MCF 10A (cell line): ENCODE measurements at regions of chr5 and their contacts with region 1.

Region 1: DNA sequence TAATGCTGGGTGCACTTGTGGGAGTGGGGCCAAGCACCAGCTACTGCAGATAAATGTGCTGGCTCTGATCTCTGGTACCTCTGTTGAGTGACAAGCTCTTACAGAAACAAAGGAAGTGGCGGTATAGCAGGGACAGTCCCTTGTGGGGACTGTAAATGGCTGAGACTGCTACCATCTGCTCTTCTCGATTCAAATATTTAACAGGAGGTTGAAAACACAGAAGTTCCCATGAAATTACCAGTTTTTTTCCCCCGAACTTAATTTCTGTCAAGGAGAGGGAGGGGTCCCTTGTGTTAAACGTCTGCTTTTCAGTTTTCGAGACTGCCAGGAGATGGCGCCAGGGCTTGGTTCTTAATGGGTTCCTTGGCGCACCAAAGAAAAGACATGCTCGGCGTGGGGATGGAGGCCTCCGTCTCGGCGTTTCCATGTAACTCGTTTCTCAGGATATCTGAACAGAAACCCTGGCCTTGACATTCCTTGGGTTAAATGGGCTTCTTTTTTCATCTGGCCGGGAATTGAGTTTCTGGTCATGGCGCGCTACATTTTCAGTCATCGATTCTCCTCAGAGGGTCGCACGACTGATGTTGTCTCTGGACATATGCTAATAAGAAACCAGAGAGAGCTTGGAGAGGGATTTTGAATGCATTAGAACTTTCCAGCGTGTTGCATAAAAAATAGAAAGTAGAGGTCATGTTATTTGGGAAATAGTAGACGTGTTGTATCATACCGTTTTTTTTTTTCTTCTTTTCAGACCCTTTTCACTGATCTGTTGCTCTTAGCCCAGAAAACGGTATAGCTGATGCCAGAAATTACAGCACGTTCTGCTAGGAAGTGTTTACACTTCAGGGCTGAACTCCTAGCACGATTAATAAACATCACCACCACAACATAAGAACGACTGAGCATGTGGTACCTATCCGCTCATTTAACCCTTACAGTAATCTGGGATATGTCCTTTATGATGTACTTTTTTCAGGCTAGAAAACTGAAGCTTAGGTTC is 64.0 kb downstream of the CARTPT start:
- DNase-seq: peak; percentile 75
- H3K4me3 Mint-ChIP-seq: no peak overlapping the region
- H3K27ac Mint-ChIP-seq: no peak overlapping the region
- H3K4me1 Mint-ChIP-seq: peaks cover 13% of the 10 kb centered on the region
- H3K27me3 Mint-ChIP-seq: peaks cover 7% of the 10 kb centered on the region
- CTCF ChIP-seq: peak; percentile 66

Region 2: DNA sequence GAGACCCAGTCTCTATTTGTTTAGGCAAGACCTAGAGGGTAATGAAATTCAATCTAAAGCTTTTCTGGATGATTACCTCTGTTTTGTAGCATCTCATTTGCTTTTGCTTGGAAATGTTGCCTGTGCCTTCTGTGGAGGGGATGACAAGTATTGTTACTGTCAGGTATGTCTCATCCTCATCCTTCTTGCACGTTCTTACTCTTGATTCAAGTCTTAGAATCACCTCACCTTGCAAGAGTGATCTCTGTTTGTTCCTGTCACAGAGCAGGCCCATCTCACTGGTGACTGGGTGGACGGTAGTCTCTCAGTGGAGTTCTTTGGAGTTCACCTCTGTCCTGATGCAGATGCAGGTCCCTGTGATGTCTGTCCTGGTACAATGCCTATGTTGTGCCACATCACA is 162.4 kb before region 1 on chr5:
- CTCF ChIA-PET with region 1: no interaction called
- POLR2A ChIA-PET with region 1: no interaction called
- intact Hi-C with region 1: no loop called
- DNase-seq: no peak
- H3K4me3 Mint-ChIP-seq: no peak overlapping the region
- H3K27ac Mint-ChIP-seq: no peak overlapping the region
- H3K4me1 Mint-ChIP-seq: no peaks in the 10 kb centered on the region
- H3K27me3 Mint-ChIP-seq: no peaks in the 10 kb centered on the region
- CTCF ChIP-seq: no peak

Region 3: DNA sequence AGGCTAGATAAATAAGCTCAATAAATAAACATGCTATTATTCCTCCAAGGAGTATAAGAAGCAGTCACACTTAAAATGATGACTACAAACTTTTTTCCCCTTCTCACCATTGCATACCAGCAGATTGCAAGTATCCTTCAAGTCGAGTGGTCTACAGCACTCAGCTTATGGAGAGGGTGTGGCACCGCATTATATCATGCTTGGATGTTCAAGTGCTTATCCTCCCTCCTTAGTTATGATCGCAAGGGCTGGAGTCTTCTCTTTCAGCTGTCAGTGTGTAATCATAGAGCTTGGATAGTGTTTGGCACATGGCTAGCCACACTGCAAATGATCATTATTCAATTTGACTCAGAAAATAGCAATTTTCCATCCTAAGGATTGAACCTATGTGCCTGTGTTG is 60.0 kb after region 1 on chr5:
- CTCF ChIA-PET with region 1: no interaction called
- POLR2A ChIA-PET with region 1: no interaction called
- intact Hi-C with region 1: no loop called
- DNase-seq: no peak
- H3K4me3 Mint-ChIP-seq: no peak overlapping the region
- H3K27ac Mint-ChIP-seq: no peak overlapping the region
- H3K4me1 Mint-ChIP-seq: no peaks in the 10 kb centered on the region
- H3K27me3 Mint-ChIP-seq: peaks cover 11% of the 10 kb centered on the region
- CTCF ChIP-seq: no peak

Region 4: GRCh38 chr5:71922584-71923106 is 139.6 kb after region 1 on chr5:
- CTCF ChIA-PET with region 1: interaction called, 4 read pairs
- POLR2A ChIA-PET with region 1: interaction called, 4 read pairs
- intact Hi-C with region 1: loop called (anchors 2 kb)
- DNase-seq: peak; percentile 91
- H3K4me3 Mint-ChIP-seq: no peak overlapping the region
- H3K27ac Mint-ChIP-seq: peak overlapping the region; percentile 71
- H3K4me1 Mint-ChIP-seq: peaks cover 26% of the 10 kb centered on the region
- H3K27me3 Mint-ChIP-seq: no peaks in the 10 kb centered on the region
- CTCF ChIP-seq: no peak

Region 5: GRCh38 chr5:72108202-72109061 is 325.4 kb after region 1 on chr5:
- CTCF ChIA-PET with region 1: no interaction called
- POLR2A ChIA-PET with region 1: no interaction called
- intact Hi-C with region 1: loop called (anchors 5 kb)
- DNase-seq: peak; percentile 38
- H3K4me3 Mint-ChIP-seq: peak overlapping the region; percentile 83
- H3K27ac Mint-ChIP-seq: no peak overlapping the region
- H3K4me1 Mint-ChIP-seq: peaks cover 5% of the 10 kb centered on the region
- H3K27me3 Mint-ChIP-seq: peaks cover 11% of the 10 kb centered on the region
- CTCF ChIP-seq: no peak

Region 6: DNA sequence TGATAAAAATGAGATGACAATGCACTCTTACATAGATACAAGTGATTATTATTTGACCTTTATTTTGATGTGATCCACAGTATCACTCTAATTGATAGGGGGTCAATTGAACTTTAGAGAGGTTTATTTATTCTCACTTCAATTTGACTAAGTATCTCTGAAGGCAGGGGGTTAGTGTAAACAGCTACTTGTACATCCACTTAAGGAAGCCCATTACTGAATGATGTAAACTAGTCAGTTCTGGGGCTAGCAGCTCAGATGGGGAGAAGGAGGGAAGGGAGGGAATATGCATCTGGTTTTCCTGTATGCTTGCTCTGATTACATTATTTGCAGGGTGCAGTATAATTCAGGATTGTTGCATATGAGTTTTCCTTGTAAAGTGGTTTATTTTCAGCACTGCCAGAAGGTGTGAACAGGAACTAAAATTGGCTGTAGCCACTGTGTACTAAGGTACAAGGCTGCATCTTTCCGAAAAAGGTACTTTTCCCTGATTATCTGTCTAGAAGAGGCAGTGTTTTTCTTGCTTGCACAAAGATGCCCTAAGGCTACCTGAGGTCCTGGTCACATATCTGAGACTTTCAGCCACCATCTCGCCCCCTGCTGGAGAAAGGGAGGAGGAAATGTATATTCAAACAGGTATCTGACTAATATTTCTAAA is 485.8 kb after region 1 on chr5:
- CTCF ChIA-PET with region 1: no interaction called
- POLR2A ChIA-PET with region 1: no interaction called
- intact Hi-C with region 1: loop called (anchors 1 kb)
- DNase-seq: peak; percentile 80
- H3K4me3 Mint-ChIP-seq: no peak overlapping the region
- H3K27ac Mint-ChIP-seq: no peak overlapping the region
- H3K4me1 Mint-ChIP-seq: peaks cover 27% of the 10 kb centered on the region
- H3K27me3 Mint-ChIP-seq: no peaks in the 10 kb centered on the region
- CTCF ChIP-seq: peak; percentile 62

Region 7: GRCh38 chr5:72537166-72537565 is 754.1 kb after region 1 on chr5:
- CTCF ChIA-PET with region 1: no interaction called
- POLR2A ChIA-PET with region 1: no interaction called
- intact Hi-C with region 1: loop called (anchors 5 kb)
- DNase-seq: no peak
- H3K4me3 Mint-ChIP-seq: no peak overlapping the region
- H3K27ac Mint-ChIP-seq: no peak overlapping the region
- H3K4me1 Mint-ChIP-seq: peaks cover 33% of the 10 kb centered on the region
- H3K27me3 Mint-ChIP-seq: no peaks in the 10 kb centered on the region
- CTCF ChIP-seq: no peak